Right cardiac atrium (tissue), 5 donors: ENCODE measurements at regions of chr5 and their contacts with region 1.

Region 1: GRCh38 chr5:138138949-138139780 is at the start of gene NME5:
- DNase-seq: peak; percentile 73 to 90 (median 86)
- ATAC-seq: peak; percentile 93
- H3K4me3 ChIP-seq: peak within 1 kb of the TSS; percentile 80
- H3K27ac ChIP-seq: no peak within 1 kb of the TSS
- H3K4me1 ChIP-seq: no peaks in the 10 kb centered on the region
- H3K27me3 ChIP-seq: no peaks in the 10 kb centered on the region
- total RNA-seq, gene NME5: 5.0 to 6.8 (median 6.1) TPM

Region 2: DNA sequence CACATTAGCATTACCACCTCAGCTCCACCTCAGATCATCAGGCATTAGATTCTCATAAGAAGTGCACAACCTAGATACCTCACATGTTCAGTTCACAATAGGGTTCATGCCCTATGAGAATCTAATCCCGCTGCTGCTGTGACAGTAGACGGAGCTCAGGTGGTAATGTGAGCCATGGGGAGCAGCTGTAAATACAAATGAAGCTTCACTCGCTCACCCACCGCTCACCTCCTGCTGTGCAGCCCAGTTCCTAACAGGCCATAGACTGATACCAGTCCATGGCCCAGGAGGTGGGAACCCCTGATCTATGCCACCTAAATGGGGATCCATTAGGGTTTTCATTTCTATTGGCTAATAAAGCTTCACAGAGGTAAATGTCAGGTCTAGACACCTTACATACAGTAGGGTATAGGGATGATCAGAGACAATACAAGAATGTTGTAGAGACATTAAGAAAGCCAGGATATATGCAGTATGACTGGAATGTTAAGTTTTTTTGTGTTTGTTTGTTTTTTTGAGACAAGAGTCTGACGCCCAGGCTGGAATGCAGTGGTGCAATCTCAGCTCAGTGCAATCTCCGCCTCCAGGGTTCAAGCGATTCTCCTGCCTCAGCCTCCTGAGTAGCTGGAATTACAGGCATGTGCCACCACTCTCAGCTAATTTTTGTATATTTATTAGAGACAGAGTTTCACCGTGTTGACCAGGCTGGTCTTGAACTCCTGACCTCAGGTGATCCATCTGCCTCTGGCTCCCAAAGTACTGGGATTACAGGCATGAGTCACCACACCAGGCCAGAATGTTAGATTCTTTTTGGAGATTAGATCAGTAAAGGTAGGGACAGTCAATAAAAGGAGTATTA is 378.6 kb before region 1 on chr5:
- intact Hi-C with region 1: loop called in 1 of 4 experiments (anchors 10 kb)
- DNase-seq: no peak
- ATAC-seq: no peak
- H3K4me3 ChIP-seq: no peak overlapping the region
- H3K27ac ChIP-seq: no peak overlapping the region
- H3K4me1 ChIP-seq: no peaks in the 10 kb centered on the region
- H3K27me3 ChIP-seq: no peaks in the 10 kb centered on the region

Region 3: GRCh38 chr5:137778772-137779564 is 360.2 kb before region 1 on chr5:
- intact Hi-C with region 1: loop called in 1 of 4 experiments (anchors 10 kb)
- DNase-seq: no peak
- ATAC-seq: no peak
- H3K4me3 ChIP-seq: no peak overlapping the region
- H3K27ac ChIP-seq: no peak overlapping the region
- H3K4me1 ChIP-seq: no peaks in the 10 kb centered on the region
- H3K27me3 ChIP-seq: no peaks in the 10 kb centered on the region

Region 4: GRCh38 chr5:138077065-138077696 is 62.0 kb before region 1 on chr5:
- intact Hi-C with region 1: loop called in 1 of 4 experiments (anchors 10 kb)
- DNase-seq: peak in 2 of 3 donors; percentile 48 to 82
- ATAC-seq: peak; percentile 68 to 77
- H3K4me3 ChIP-seq: no peak overlapping the region
- H3K27ac ChIP-seq: no peak overlapping the region
- H3K4me1 ChIP-seq: no peaks in the 10 kb centered on the region
- H3K27me3 ChIP-seq: no peaks in the 10 kb centered on the region

Region 5: GRCh38 chr5:138226910-138227309 is 87.7 kb after region 1 on chr5:
- intact Hi-C with region 1: no loop called
- DNase-seq: no peak
- ATAC-seq: no peak
- H3K4me3 ChIP-seq: no peak overlapping the region
- H3K27ac ChIP-seq: no peak overlapping the region
- H3K4me1 ChIP-seq: peaks cover 3% of the 10 kb centered on the region
- H3K27me3 ChIP-seq: no peaks in the 10 kb centered on the region